ENCODE measurements at regions of chr2 and their contacts with region 1.

Region 1: DNA sequence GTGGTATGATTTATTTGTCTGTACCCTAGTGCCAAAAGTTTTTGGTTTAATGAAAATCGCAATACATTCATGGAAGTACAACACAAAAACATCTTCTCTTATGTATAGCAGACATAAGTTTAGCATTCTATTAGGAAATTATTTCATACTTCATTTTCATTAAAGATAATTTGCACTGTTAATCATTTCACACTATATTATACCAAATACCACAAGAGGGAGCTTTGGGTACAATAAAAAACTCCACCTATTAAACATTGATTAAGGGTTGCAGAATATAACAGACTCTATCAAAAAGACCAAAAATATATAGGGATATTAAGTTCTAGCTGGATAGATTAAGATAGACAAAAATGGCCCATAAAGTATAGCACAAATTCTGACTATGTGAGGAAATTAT is 79.0 kb downstream of the SLC66A3 start:
- DNase-seq: no peak
- H3K4me3 ChIP-seq: no peak overlapping the region
- H3K27ac ChIP-seq: no peak overlapping the region
- H3K4me1 ChIP-seq: peaks cover 11 to 17% (median 13%) of the 10 kb centered on the region in 4 donors
- H3K27me3 ChIP-seq: no peaks in the 10 kb centered on the region
- CTCF ChIP-seq: peak; percentile 52 to 59 (median 54)
- EP300 ChIP-seq: no peak
- POLR2A ChIP-seq: no peak

Region 2: DNA sequence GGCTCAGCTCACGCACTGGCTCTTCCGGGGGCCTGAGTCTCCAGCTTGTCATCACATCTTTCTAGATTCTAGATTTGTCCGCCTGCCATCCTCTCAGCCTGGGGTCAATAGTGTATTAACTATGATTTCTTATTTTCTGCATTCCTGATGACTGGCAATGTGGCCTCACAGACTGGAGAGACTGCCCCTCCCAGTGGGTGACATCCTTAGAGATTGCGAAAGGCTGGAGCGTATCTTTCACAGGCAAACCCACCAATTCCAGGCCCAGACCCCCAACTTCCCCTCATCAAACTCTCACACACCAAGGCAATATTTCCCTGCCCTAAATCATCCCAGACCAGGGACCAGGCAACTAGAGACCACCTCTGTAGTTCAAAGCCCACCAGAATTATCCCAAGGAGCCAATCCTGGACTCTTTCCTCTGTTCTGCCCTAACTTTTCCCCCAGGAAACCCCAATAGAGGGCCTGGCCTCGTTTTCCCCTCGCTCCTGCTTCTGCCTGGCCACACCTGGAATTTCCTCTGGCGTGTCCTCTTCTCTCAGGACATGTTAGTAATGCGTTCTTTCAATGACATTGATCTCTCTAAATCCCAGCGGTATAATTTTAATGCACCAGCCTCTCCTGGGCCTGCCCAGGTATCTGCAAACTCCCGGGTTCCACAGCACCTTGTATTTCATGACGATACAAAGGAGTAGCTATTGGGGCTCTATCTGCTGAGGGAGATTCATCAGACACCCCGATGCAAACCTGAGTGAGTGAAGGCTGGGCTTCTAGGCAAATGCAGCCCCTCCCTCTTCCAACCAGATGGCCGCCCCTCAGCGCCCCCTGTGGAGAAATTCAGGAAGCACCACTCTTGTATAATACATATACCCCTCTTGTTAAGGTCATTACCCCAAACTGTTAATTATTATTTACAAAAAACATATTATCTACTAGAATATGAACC is 325.0 kb before region 1 on chr2:
- intact Hi-C with region 1: no loop called
- DNase-seq: no peak
- H3K4me3 ChIP-seq: no peak overlapping the region
- H3K27ac ChIP-seq: no peak overlapping the region
- H3K4me1 ChIP-seq: peaks cover 0 to 29% (median 25%) of the 10 kb centered on the region in 4 donors
- H3K27me3 ChIP-seq: peaks cover 0 to 38% (median 7%) of the 10 kb centered on the region in 4 donors
- CTCF ChIP-seq: peak; percentile 18 to 41 (median 37)
- EP300 ChIP-seq: no peak
- POLR2A ChIP-seq: no peak

Region 3: GRCh38 chr2:11446733-11447248 is 212.5 kb after region 1 on chr2:
- intact Hi-C with region 1: loop called (anchors 2 kb)
- DNase-seq: no peak
- H3K4me3 ChIP-seq: no peak overlapping the region
- H3K27ac ChIP-seq: peak overlapping the region in 3 of 4 donors; percentile 14 to 55 (median 26)
- H3K4me1 ChIP-seq: peaks cover 0 to 6% (median 1%) of the 10 kb centered on the region in 4 donors
- H3K27me3 ChIP-seq: no peaks in the 10 kb centered on the region
- CTCF ChIP-seq: peak; percentile 80 to 88 (median 81)
- EP300 ChIP-seq: no peak
- POLR2A ChIP-seq: no peak

Measured in esophagus muscularis mucosa (tissue), 4 donors.